Natural killer cell (primary cell): ENCODE measurements at regions of chr10 and their contacts with region 1.

Region 1: GRCh38 chr10:73759512-73760115 is 15.4 kb downstream of the SEC24C start:
- DNase-seq: peak; percentile 71 to 87
- ATAC-seq: peak; percentile 82 to 94 (median 89)
- H3K4me3 ChIP-seq: no peak overlapping the region
- H3K4me3 Mint-ChIP-seq: peak overlapping the region; percentile 75
- H3K27ac ChIP-seq: peak overlapping the region; percentile 90
- H3K27ac Mint-ChIP-seq: peak overlapping the region; percentile 93 to 96
- H3K4me1 ChIP-seq: peaks cover 53% of the 10 kb centered on the region
- H3K4me1 Mint-ChIP-seq: peaks cover 67 to 74% of the 10 kb centered on the region in 2 donors
- H3K27me3 ChIP-seq: no peaks in the 10 kb centered on the region
- H3K27me3 Mint-ChIP-seq: no peaks in the 10 kb centered on the region
- CTCF ChIP-seq: no peak

Region 2: GRCh38 chr10:73743905-73744663 is 15.5 kb before region 1 on chr10 and contains the start of gene SEC24C:
- intact Hi-C with region 1: loop called (anchors 1 kb)
- DNase-seq: peak; percentile 95 to 99
- ATAC-seq: peak; percentile 88 to 95 (median 88)
- H3K4me3 ChIP-seq: peak within 1 kb of the TSS; percentile 73
- H3K4me3 Mint-ChIP-seq: peak within 1 kb of the TSS; percentile 100
- H3K27ac ChIP-seq: peak within 1 kb of the TSS; percentile 92
- H3K27ac Mint-ChIP-seq: peak within 1 kb of the TSS; percentile 98 to 99
- H3K4me1 ChIP-seq: peaks cover 27% of the 10 kb centered on the region
- H3K4me1 Mint-ChIP-seq: peaks cover 30 to 35% of the 10 kb centered on the region in 2 donors
- H3K27me3 ChIP-seq: no peaks in the 10 kb centered on the region
- H3K27me3 Mint-ChIP-seq: no peaks in the 10 kb centered on the region
- CTCF ChIP-seq: no peak
- total RNA-seq, gene SEC24C: 153 to 161 (median 160) TPM

Region 3: GRCh38 chr10:73791871-73792400 is 32.3 kb after region 1 on chr10:
- intact Hi-C with region 1: no loop called
- DNase-seq: no peak
- ATAC-seq: no peak
- H3K4me3 ChIP-seq: no peak overlapping the region
- H3K4me3 Mint-ChIP-seq: no peak overlapping the region
- H3K27ac ChIP-seq: no peak overlapping the region
- H3K27ac Mint-ChIP-seq: no peak overlapping the region
- H3K4me1 ChIP-seq: peaks cover 7% of the 10 kb centered on the region
- H3K4me1 Mint-ChIP-seq: peaks cover 10 to 23% of the 10 kb centered on the region in 2 donors
- H3K27me3 ChIP-seq: no peaks in the 10 kb centered on the region
- H3K27me3 Mint-ChIP-seq: no peaks in the 10 kb centered on the region
- CTCF ChIP-seq: no peak

Region 4: GRCh38 chr10:73827346-73828089 is 67.9 kb after region 1 on chr10:
- intact Hi-C with region 1: no loop called
- DNase-seq: no peak
- ATAC-seq: no peak
- H3K4me3 ChIP-seq: no peak overlapping the region
- H3K4me3 Mint-ChIP-seq: no peak overlapping the region
- H3K27ac ChIP-seq: no peak overlapping the region
- H3K27ac Mint-ChIP-seq: peak overlapping the region in 1 of 2 donors; percentile 47
- H3K4me1 ChIP-seq: no peaks in the 10 kb centered on the region
- H3K4me1 Mint-ChIP-seq: no peaks in the 10 kb centered on the region
- H3K27me3 ChIP-seq: no peaks in the 10 kb centered on the region
- H3K27me3 Mint-ChIP-seq: no peaks in the 10 kb centered on the region
- CTCF ChIP-seq: no peak